ENCODE measurements at regions of chr9 and their contacts with region 1.

Region 1: GRCh38 chr9:128688512-128689292 is at the start of gene SET:
- DNase-seq: peak; percentile 91
- H3K4me3 Mint-ChIP-seq: peak within 1 kb of the TSS; percentile 78
- H3K27ac Mint-ChIP-seq: peak within 1 kb of the TSS; percentile 91
- H3K4me1 Mint-ChIP-seq: peaks cover 61% of the 10 kb centered on the region
- H3K27me3 Mint-ChIP-seq: no peaks in the 10 kb centered on the region
- total RNA-seq, gene SET: 669 to 771 TPM

Region 2: DNA sequence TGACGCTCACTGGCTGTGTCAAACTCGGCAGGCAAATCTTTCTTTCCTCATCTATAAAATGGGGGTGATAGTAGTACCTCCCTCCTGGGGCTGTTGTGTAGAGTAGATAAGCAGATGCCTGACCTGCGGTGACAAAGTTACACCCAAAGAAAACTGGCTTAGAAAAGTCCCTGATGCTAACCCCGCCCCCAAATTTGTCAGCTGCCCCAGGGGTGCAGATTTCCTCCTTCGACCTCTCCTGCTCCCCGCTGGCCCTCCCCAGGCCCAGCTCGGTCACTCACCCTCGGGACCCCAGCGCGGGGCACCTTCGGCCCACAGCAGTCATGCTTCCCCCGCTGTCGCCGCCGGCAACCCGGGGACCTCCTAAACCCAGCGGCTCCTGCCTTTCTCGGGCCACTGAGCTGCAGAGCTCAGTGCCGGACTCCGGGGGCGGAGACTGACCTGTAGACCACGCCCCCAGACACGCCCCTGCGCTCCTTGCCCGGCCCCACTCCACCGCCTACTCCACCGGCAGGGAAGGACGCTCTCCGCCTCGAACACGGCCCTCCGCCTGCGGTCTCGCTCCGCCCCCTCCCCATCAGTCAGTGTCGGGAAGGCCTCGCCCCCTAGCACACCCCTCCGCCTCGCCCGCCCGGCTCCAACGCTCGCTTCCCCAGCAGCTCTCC is 917.7 kb before region 1 on chr9:
- CTCF ChIA-PET with region 1: no interaction called
- intact Hi-C with region 1: loop called (anchors 2 kb)
- DNase-seq: peak; percentile 99
- H3K4me3 Mint-ChIP-seq: peak overlapping the region; percentile 90
- H3K27ac Mint-ChIP-seq: peak overlapping the region; percentile 91
- H3K4me1 Mint-ChIP-seq: peaks cover 62% of the 10 kb centered on the region
- H3K27me3 Mint-ChIP-seq: no peaks in the 10 kb centered on the region

Region 3: DNA sequence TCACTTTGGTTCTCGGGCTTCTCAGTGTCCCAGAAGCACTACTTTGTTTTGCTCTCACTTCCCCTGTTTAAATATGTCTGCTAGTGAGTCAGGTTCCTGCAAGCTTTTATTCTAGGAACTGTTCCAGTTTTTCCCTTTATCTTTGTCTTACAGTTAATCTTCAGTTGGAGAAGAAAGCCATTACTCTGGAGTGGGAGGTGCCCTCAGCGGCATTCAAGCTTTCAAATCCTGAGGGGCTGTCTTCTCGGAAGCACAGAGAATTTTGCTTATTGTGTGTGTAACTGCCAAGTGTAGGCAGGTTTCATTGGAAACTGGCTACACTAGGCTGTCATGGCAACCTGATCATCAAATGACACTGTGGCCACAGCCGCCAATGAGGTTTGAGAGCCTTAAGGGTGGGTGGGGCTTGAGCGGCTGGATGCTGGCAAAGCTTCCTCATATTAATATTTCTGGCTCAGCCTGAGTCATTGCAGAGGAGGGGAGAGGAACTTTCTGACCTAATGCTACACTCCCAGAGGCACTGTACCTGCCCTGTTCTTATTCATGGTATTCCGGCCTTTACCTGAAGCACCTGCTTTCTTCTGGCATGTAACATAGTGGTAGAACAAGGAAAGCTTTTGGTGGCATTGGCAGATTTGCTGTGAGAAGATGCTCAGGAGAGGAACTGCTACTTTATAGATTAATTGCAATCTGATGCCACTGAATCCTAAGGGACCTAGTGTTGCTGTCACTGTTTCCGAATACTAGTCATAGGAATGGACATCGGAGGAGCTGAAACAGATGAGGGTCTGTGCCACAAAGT is 594.3 kb before region 1 on chr9:
- CTCF ChIA-PET with region 1: no interaction called
- intact Hi-C with region 1: no loop called
- DNase-seq: peak; percentile 91
- H3K4me3 Mint-ChIP-seq: peak overlapping the region; percentile 65
- H3K27ac Mint-ChIP-seq: peak overlapping the region; percentile 95
- H3K4me1 Mint-ChIP-seq: peaks cover 87% of the 10 kb centered on the region
- H3K27me3 Mint-ChIP-seq: no peaks in the 10 kb centered on the region

Region 4: GRCh38 chr9:128429513-128430086 is 259.1 kb before region 1 on chr9:
- CTCF ChIA-PET with region 1: no interaction called
- intact Hi-C with region 1: no loop called
- DNase-seq: no peak
- H3K4me3 Mint-ChIP-seq: no peak overlapping the region
- H3K27ac Mint-ChIP-seq: no peak overlapping the region
- H3K4me1 Mint-ChIP-seq: no peaks in the 10 kb centered on the region
- H3K27me3 Mint-ChIP-seq: no peaks in the 10 kb centered on the region

Region 5: GRCh38 chr9:128552153-128552743 is 136.5 kb before region 1 on chr9 and contains the start of gene SPTAN1:
- CTCF ChIA-PET with region 1: no interaction called
- intact Hi-C with region 1: loop called (anchors 1 kb)
- DNase-seq: peak; percentile 97
- H3K4me3 Mint-ChIP-seq: peak within 1 kb of the TSS; percentile 85
- H3K27ac Mint-ChIP-seq: peak within 1 kb of the TSS; percentile 84
- H3K4me1 Mint-ChIP-seq: peaks cover 42% of the 10 kb centered on the region
- H3K27me3 Mint-ChIP-seq: no peaks in the 10 kb centered on the region
- total RNA-seq, gene SPTAN1: 162 to 183 TPM

Region 6: DNA sequence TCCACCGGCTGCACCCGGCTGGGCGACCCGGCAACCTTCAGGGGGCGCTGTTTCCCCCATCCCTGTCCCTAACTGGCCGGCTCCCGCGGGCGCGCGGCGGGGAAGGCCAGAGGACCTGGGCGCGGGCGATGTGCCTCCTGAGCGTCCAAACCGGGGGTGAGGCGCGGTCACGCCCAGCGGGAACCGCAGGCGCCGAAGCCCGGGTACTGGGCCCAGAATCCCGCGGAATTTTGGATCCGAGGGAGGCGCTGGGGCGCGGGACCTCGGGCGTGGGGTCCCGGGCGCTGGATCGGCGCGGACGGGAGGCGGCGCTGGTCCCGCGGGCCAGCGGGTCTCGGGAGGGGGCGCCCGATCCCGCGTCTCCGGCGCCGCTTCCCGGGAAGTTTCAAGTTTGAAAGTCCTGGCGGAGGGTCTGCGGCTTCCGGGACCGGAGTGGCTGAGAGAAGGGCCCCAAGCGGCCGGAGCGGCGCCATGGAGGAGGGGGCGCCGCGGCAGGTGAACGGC is 13.8 kb after region 1 on chr9 and contains the start of gene PKN3:
- CTCF ChIA-PET with region 1: interaction called, 18 read pairs
- intact Hi-C with region 1: loop called (anchors 1 kb)
- DNase-seq: peak; percentile 91
- H3K4me3 Mint-ChIP-seq: peak within 1 kb of the TSS; percentile 84
- H3K27ac Mint-ChIP-seq: peak within 1 kb of the TSS; percentile 19
- H3K4me1 Mint-ChIP-seq: peaks cover 13% of the 10 kb centered on the region
- H3K27me3 Mint-ChIP-seq: no peaks in the 10 kb centered on the region
- total RNA-seq, gene PKN3: 6.3 to 7.3 TPM

Region 7: GRCh38 chr9:128771745-128772519 is 83.2 kb after region 1 on chr9 and contains the start of gene ZER1:
- CTCF ChIA-PET with region 1: no interaction called
- intact Hi-C with region 1: loop called (anchors 1 kb)
- DNase-seq: peak; percentile 95
- H3K4me3 Mint-ChIP-seq: peak within 1 kb of the TSS; percentile 95
- H3K27ac Mint-ChIP-seq: peak within 1 kb of the TSS; percentile 90
- H3K4me1 Mint-ChIP-seq: peaks cover 24% of the 10 kb centered on the region
- H3K27me3 Mint-ChIP-seq: no peaks in the 10 kb centered on the region
- total RNA-seq, gene ZER1: 9.9 to 11.0 TPM

Region 8: GRCh38 chr9:128881901-128882681 is 193.4 kb after region 1 on chr9 and contains the starts of genes KYAT1 and LRRC8A:
- CTCF ChIA-PET with region 1: interaction called, 6 read pairs
- intact Hi-C with region 1: loop called (anchors 1 kb)
- DNase-seq: peak; percentile 98
- H3K4me3 Mint-ChIP-seq: peak within 1 kb of the TSS; percentile 96
- H3K27ac Mint-ChIP-seq: peak within 1 kb of the TSS; percentile 94
- H3K4me1 Mint-ChIP-seq: peaks cover 50% of the 10 kb centered on the region
- H3K27me3 Mint-ChIP-seq: no peaks in the 10 kb centered on the region
- total RNA-seq, gene KYAT1: 29.6 to 33.6 TPM
- total RNA-seq, gene LRRC8A: 13.1 to 13.2 TPM

Region 9: GRCh38 chr9:128999576-129000226 is 311.0 kb after region 1 on chr9:
- CTCF ChIA-PET with region 1: no interaction called
- intact Hi-C with region 1: no loop called
- DNase-seq: peak; percentile 37
- H3K4me3 Mint-ChIP-seq: no peak overlapping the region
- H3K27ac Mint-ChIP-seq: peak overlapping the region; percentile 78
- H3K4me1 Mint-ChIP-seq: peaks cover 15% of the 10 kb centered on the region
- H3K27me3 Mint-ChIP-seq: no peaks in the 10 kb centered on the region

Region 10: GRCh38 chr9:129028192-129028957 is 339.7 kb after region 1 on chr9 and contains the start of gene SH3GLB2:
- CTCF ChIA-PET with region 1: no interaction called
- intact Hi-C with region 1: loop called (anchors 5 kb)
- DNase-seq: peak; percentile 95
- H3K4me3 Mint-ChIP-seq: peak within 1 kb of the TSS; percentile 84
- H3K27ac Mint-ChIP-seq: no peak within 1 kb of the TSS
- H3K4me1 Mint-ChIP-seq: peaks cover 13% of the 10 kb centered on the region
- H3K27me3 Mint-ChIP-seq: no peaks in the 10 kb centered on the region
- total RNA-seq, gene SH3GLB2: 38.0 to 38.2 TPM

Measured in activated naive CD4-positive, alpha-beta T cell treated with anti-CD3 and anti-CD28 coated beads for 36 hours (primary cell).